Activated CD4-positive, alpha-beta memory T cell treated with anti-CD3 and anti-CD28 coated beads for 36 hours (primary cell): ENCODE measurements at regions of chr19 and their contacts with region 1.

Region 1: DNA sequence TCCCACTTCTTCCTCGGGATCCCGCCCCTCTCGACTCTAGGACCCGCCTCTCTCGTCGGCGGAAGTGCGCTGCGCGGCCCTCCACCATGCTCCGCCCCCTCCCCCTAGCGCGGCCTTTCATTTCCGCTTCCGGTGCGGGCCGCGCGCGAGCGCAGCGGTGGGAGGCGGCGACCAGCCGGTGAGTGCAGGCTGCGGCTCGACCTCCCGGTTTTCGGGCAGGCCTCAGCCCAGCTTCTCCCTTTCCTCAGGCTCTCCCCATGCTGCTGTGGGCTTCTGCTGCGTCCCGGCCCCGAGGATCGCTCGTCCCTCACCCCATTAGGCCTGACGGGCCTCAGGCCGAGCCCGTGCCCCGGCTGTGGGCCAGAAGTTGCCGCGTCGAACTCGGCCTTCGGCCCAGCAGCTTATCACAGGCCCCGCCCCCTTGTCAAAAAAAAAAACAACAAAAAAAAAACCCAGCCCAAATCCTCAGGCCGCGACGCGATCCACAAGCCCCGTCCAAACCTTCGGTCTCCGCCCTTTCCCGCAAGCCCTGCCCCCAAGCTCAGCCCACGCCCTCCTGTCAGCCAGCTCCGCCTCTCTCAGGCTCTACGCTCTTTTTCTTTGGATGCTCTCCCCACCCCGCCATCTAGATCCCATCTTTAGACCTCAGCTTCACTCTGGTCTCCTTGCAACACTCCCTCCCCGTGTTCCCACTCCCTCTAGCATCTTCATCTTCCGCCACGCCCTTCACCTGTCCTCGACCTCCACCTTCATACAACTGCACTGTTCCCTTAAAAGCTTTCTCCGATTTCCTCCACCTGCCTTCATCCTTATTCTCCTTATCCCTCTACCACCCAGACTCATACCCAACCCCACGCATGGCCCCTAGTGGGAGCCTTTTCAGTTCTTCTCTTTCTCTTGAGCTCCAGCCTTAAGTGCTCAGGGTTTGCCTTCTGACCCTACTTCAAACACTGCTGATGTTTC is at the start of gene CLASRP:
- DNase-seq: peak; percentile 92
- H3K4me3 Mint-ChIP-seq: peak within 1 kb of the TSS; percentile 98
- H3K27ac Mint-ChIP-seq: peak within 1 kb of the TSS; percentile 95
- H3K4me1 Mint-ChIP-seq: peaks cover 29% of the 10 kb centered on the region
- H3K27me3 Mint-ChIP-seq: no peaks in the 10 kb centered on the region
- total RNA-seq, gene CLASRP: 89.6 to 98.4 TPM

Region 2: GRCh38 chr19:44635581-44636438 is 403.4 kb before region 1 on chr19:
- CTCF ChIA-PET with region 1: no interaction called
- POLR2A ChIA-PET with region 1: no interaction called
- intact Hi-C with region 1: no loop called
- DNase-seq: no peak
- H3K4me3 Mint-ChIP-seq: no peak overlapping the region
- H3K27ac Mint-ChIP-seq: no peak overlapping the region
- H3K4me1 Mint-ChIP-seq: no peaks in the 10 kb centered on the region
- H3K27me3 Mint-ChIP-seq: peaks cover 13% of the 10 kb centered on the region

Region 3: GRCh38 chr19:45001087-45001739 is 38.0 kb before region 1 on chr19 and contains the start of gene RELB:
- CTCF ChIA-PET with region 1: no interaction called
- POLR2A ChIA-PET with region 1: interaction called, 14 read pairs
- intact Hi-C with region 1: loop called (anchors 1 kb)
- DNase-seq: peak; percentile 97
- H3K4me3 Mint-ChIP-seq: peak within 1 kb of the TSS; percentile 96
- H3K27ac Mint-ChIP-seq: peak within 1 kb of the TSS; percentile 99
- H3K4me1 Mint-ChIP-seq: peaks cover 22% of the 10 kb centered on the region
- H3K27me3 Mint-ChIP-seq: no peaks in the 10 kb centered on the region
- total RNA-seq, gene RELB: 62.4 to 63.1 TPM

Region 4: DNA sequence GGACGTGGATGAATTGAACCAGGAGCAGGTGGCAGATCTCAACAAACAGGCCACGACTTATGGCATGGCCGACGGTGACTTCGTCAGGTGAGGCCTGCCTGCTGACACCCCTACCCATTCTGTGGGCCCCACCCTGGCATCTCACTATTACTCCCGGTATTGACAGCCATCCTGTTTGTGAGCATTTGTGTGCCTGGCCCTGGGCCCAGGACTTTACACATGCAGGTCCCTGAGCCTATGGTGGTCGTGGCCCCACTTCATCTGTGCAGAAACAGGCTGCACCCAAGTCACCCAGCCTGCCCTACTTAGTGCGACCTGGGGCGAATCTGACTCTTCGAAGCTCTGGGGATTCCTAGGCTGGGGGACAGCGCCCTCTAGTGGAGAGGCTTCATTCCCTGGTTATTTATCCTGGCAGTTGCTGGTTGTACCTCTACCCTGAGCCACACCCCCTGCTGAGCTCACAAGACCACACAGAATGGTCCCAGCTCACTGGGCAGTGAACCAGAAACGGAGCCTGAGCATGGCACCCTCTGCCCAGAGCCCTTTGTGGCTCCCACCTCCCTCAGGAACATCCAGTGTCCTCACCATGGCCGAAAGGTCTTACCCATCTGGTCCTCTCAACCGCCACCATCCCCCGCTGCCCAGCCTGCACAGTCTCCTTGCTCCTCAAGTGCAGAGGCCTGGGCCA is 20.2 kb after region 1 on chr19:
- CTCF ChIA-PET with region 1: interaction called, 14 read pairs
- POLR2A ChIA-PET with region 1: interaction called, 4 read pairs
- intact Hi-C with region 1: no loop called
- DNase-seq: peak; percentile 87
- H3K4me3 Mint-ChIP-seq: no peak overlapping the region
- H3K27ac Mint-ChIP-seq: no peak overlapping the region
- H3K4me1 Mint-ChIP-seq: no peaks in the 10 kb centered on the region
- H3K27me3 Mint-ChIP-seq: no peaks in the 10 kb centered on the region

Region 5: GRCh38 chr19:45079063-45079910 is 40.1 kb after region 1 on chr19 and contains the start of gene GEMIN7:
- CTCF ChIA-PET with region 1: interaction called, 3 read pairs
- POLR2A ChIA-PET with region 1: interaction called, 3 read pairs
- intact Hi-C with region 1: loop called (anchors 1 kb)
- DNase-seq: peak; percentile 88
- H3K4me3 Mint-ChIP-seq: peak within 1 kb of the TSS; percentile 96
- H3K27ac Mint-ChIP-seq: peak within 1 kb of the TSS; percentile 76
- H3K4me1 Mint-ChIP-seq: peaks cover 42% of the 10 kb centered on the region
- H3K27me3 Mint-ChIP-seq: no peaks in the 10 kb centered on the region
- total RNA-seq, gene GEMIN7: 29.8 to 30.1 TPM

Region 6: DNA sequence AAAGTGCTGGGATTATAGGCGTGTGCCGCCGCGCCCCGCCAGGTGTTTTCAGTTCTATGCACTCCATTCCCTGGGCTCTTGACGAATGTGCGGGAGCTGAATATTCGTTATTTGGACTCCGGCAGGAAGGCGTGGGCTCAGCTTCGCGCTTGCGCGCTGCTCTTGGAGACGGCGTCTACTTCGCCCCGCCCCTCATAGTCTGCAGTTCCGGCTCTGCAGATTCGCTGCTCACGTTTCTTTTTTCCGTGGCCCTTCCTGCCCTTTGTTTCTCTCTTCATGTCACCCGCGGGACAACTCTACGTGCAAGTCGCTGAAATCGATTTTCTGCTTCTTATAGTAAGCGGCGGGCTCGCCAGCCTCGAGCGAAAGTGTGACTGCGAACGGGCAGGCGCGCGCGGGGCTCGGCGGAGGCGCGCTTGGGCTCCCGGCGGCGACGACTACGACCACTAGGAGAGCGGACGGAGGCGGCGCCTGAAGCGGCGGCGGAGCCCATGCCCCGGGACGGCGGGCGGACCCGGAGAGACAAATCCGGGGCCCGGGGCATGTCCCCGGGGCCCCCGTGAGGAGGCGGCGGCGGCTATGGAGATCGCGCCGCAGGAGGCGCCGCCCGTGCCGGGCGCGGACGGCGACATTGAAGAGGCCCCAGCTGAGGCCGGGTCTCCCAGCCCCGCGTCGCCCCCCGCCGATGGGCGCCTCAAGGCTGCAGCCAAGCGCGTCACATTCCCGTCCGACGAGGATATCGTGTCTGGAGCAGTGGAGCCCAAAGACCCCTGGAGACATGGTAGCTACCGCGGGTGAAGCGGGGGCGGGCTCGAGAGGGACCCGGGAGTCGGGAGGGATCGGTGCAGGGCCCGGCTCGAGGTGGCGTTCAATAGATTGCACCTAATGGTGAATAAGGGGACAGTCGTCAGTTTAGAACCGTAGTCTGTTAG is 53.8 kb after region 1 on chr19 and contains the start of gene PPP1R37:
- CTCF ChIA-PET with region 1: no interaction called
- POLR2A ChIA-PET with region 1: interaction called, 9 read pairs
- intact Hi-C with region 1: loop called (anchors 1 kb)
- DNase-seq: peak; percentile 95
- H3K4me3 Mint-ChIP-seq: peak within 1 kb of the TSS; percentile 86
- H3K27ac Mint-ChIP-seq: peak within 1 kb of the TSS; percentile 97
- H3K4me1 Mint-ChIP-seq: peaks cover 46% of the 10 kb centered on the region
- H3K27me3 Mint-ChIP-seq: no peaks in the 10 kb centered on the region
- total RNA-seq, gene PPP1R37: 12.7 to 13.1 TPM